Dendritic cell treated with granulocyte-macrophage colony-stimulating factor and Interleukin-4, amounts not matched to agents 40 ng/mL and 50 ng/mL, for 4 days (primary cell): ENCODE measurements at regions of chr10 and their contacts with region 1.

Region 1: DNA sequence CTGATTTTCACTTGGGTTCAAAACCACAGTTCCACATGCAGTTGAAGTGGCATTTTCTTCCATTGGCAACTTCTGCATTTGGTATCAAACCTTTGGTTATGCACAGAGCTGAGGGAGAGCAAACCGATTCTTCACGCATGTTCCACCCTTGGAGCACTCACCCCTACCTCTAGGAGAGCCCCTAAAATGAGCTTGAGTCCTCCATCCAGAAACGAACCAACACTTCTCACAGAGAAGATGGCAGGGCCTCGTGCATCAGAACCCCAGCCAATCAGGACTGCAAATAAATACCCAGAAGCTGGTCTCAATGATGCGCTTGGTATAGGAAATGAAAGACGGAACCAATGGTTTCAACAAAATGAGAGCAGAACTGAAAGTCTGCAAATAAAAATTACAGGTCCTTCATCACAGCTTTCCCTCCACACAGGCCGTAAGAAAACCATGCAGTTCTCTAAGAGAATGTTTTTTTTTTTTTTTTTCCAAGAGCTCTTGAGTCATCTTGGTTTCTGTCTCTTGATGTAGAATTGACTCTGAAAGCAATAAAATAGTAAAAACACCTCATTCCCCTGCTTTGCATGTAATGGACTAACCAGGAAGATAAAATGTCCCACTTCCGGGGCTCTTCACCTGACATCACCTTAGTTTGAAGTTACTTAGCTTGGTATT is 23.9 kb downstream of the KLF6 start:
- H3K4me3 Mint-ChIP-seq: peak overlapping the region; percentile 63
- H3K27ac Mint-ChIP-seq: peak overlapping the region; percentile 93
- H3K4me1 Mint-ChIP-seq: peaks cover 87% of the 10 kb centered on the region
- H3K27me3 Mint-ChIP-seq: no peaks in the 10 kb centered on the region

Region 2: DNA sequence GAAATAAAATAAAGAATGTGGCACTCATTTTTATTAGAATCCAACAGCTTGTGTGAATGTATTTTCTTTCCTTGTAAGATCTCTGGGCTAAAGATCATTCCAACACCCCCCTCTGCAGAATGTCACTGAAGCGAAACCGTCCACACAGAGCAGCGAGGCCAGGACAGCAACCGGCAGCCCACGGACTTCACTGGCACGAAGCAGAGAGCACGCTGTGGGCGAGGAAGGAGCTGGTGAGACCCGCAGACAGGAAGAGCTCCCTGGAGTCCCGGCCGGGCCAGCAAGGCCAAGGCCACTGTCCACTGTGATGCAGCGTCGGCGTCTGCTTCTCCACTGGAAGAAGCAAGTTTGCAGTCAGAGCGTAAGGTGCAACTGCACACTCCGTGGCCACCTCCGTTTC is 175.8 kb before region 1 on chr10:
- intact Hi-C with region 1: loop called (anchors 10 kb)
- H3K4me3 Mint-ChIP-seq: no peak overlapping the region
- H3K27ac Mint-ChIP-seq: no peak overlapping the region
- H3K4me1 Mint-ChIP-seq: peaks cover 19% of the 10 kb centered on the region
- H3K27me3 Mint-ChIP-seq: peaks cover 8% of the 10 kb centered on the region

Region 3: DNA sequence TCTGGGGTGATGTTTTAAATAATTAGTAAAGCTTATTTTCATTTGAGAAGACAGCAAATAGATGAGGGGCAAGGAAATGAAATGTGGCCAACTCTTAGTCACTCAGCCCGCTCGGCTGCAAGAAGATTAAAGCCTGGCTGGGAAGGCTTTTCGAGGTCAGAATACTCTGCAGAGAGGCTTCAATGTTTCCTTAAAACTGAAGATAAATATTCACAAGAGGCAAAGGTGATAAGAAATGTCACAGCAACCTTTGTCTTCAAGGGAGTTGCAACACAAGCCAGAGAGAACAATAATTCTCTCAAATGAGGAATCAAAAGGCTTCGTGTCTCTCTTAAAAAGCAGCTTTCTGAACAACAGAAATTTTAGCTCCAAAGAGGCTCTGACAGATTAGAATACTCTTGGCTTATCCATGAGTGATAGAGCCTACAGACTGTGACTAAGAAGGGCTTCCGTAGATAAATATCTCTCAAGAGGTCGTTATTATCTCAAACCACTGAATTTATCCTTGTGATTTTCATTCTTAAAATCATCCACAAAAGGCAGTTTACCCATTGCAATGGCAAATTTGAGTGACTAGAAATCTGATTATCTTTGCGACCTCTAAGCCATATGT is 68.7 kb before region 1 on chr10:
- intact Hi-C with region 1: no loop called
- H3K4me3 Mint-ChIP-seq: no peak overlapping the region
- H3K27ac Mint-ChIP-seq: no peak overlapping the region
- H3K4me1 Mint-ChIP-seq: no peaks in the 10 kb centered on the region
- H3K27me3 Mint-ChIP-seq: peaks cover 4% of the 10 kb centered on the region